ENCODE measurements at regions of chr11 and their contacts with region 1.

Region 1: GRCh38 chr11:61733120-61733978 is 19.1 kb upstream of the MYRF start:
- DNase-seq: peak; percentile 71 to 85
- H3K4me3 ChIP-seq: no peak overlapping the region
- H3K27ac ChIP-seq: no peak overlapping the region
- H3K4me1 ChIP-seq: peaks cover 35% of the 10 kb centered on the region
- H3K27me3 ChIP-seq: no peaks in the 10 kb centered on the region
- CTCF ChIP-seq: peak; percentile 98

Region 2: DNA sequence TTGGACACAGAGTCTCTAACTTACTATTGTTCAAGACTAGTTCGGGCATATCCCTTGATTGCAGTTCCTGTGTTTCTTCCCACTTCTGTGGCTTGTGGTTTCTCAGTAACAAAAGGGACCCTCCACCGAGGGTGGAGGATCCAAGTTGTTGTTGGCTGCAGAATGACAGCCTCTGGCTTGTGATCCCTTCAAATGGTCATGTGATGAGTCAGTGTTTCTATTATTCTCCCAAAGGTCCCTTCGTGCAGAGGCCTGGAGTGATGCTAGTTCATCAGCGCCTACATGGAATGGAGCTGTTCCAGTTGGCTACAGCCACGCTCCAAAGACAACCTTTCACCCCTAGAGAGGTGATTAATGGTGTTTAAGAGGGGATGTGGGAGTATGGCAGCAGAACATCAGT is 435.6 kb before region 1 on chr11:
- CTCF ChIA-PET with region 1: no interaction called
- POLR2A ChIA-PET with region 1: no interaction called
- intact Hi-C with region 1: no loop called
- DNase-seq: peak in 1 of 2 experiments; percentile 55
- H3K4me3 ChIP-seq: no peak overlapping the region
- H3K27ac ChIP-seq: no peak overlapping the region
- H3K4me1 ChIP-seq: no peaks in the 10 kb centered on the region
- H3K27me3 ChIP-seq: peaks cover 14% of the 10 kb centered on the region; the same call in 1 of the 2 replicates
- CTCF ChIP-seq: no peak

Region 3: GRCh38 chr11:61488651-61489291 is 244.6 kb before region 1 on chr11:
- CTCF ChIA-PET with region 1: interaction called, 3 read pairs
- POLR2A ChIA-PET with region 1: no interaction called
- intact Hi-C with region 1: loop called (anchors 5 kb)
- DNase-seq: peak; percentile 81 to 95
- H3K4me3 ChIP-seq: peak overlapping the region; percentile 42; the same call in 1 of the 2 replicates
- H3K27ac ChIP-seq: peak overlapping the region; percentile 88
- H3K4me1 ChIP-seq: peaks cover 53% of the 10 kb centered on the region
- H3K27me3 ChIP-seq: no peaks in the 10 kb centered on the region
- CTCF ChIP-seq: no peak

Region 4: GRCh38 chr11:61581030-61581928 is 152.1 kb before region 1 on chr11 and contains the start of gene SYT7:
- CTCF ChIA-PET with region 1: interaction called, 3 read pairs
- POLR2A ChIA-PET with region 1: no interaction called
- intact Hi-C with region 1: loop called (anchors 1 kb)
- DNase-seq: peak; percentile 90 to 99
- H3K4me3 ChIP-seq: peak within 1 kb of the TSS; percentile 57; the same call in 1 of the 2 replicates
- H3K27ac ChIP-seq: no peak within 1 kb of the TSS
- H3K4me1 ChIP-seq: peaks cover 4% of the 10 kb centered on the region; the same call in 1 of the 2 replicates
- H3K27me3 ChIP-seq: peaks cover 37% of the 10 kb centered on the region
- CTCF ChIP-seq: peak; percentile 28; the same call in 1 of the 2 replicates
- total RNA-seq, gene SYT7: 4.0 and 8.9 TPM in 2 replicates

Region 5: GRCh38 chr11:61627567-61628445 is 105.5 kb before region 1 on chr11:
- CTCF ChIA-PET with region 1: interaction called, 5 read pairs
- POLR2A ChIA-PET with region 1: no interaction called
- intact Hi-C with region 1: loop called (anchors 1 kb)
- DNase-seq: peak; percentile 70 to 80
- H3K4me3 ChIP-seq: no peak overlapping the region
- H3K27ac ChIP-seq: no peak overlapping the region
- H3K4me1 ChIP-seq: peaks cover 36% of the 10 kb centered on the region
- H3K27me3 ChIP-seq: no peaks in the 10 kb centered on the region
- CTCF ChIP-seq: peak; percentile 96

Region 6: GRCh38 chr11:61654397-61654829 is 78.9 kb before region 1 on chr11:
- CTCF ChIA-PET with region 1: no interaction called
- POLR2A ChIA-PET with region 1: no interaction called
- intact Hi-C with region 1: loop called (anchors 2 kb)
- DNase-seq: no peak
- H3K4me3 ChIP-seq: no peak overlapping the region
- H3K27ac ChIP-seq: no peak overlapping the region
- H3K4me1 ChIP-seq: no peaks in the 10 kb centered on the region
- H3K27me3 ChIP-seq: peaks cover 18% of the 10 kb centered on the region; the same call in 1 of the 2 replicates
- CTCF ChIP-seq: no peak

Region 7: GRCh38 chr11:61688365-61689163 is 44.8 kb before region 1 on chr11:
- CTCF ChIA-PET with region 1: no interaction called
- POLR2A ChIA-PET with region 1: no interaction called
- intact Hi-C with region 1: loop called (anchors 2 kb)
- DNase-seq: peak in 1 of 2 experiments; percentile 82
- H3K4me3 ChIP-seq: no peak overlapping the region
- H3K27ac ChIP-seq: no peak overlapping the region
- H3K4me1 ChIP-seq: peaks cover 2% of the 10 kb centered on the region
- H3K27me3 ChIP-seq: no peaks in the 10 kb centered on the region
- CTCF ChIP-seq: no peak

Region 8: DNA sequence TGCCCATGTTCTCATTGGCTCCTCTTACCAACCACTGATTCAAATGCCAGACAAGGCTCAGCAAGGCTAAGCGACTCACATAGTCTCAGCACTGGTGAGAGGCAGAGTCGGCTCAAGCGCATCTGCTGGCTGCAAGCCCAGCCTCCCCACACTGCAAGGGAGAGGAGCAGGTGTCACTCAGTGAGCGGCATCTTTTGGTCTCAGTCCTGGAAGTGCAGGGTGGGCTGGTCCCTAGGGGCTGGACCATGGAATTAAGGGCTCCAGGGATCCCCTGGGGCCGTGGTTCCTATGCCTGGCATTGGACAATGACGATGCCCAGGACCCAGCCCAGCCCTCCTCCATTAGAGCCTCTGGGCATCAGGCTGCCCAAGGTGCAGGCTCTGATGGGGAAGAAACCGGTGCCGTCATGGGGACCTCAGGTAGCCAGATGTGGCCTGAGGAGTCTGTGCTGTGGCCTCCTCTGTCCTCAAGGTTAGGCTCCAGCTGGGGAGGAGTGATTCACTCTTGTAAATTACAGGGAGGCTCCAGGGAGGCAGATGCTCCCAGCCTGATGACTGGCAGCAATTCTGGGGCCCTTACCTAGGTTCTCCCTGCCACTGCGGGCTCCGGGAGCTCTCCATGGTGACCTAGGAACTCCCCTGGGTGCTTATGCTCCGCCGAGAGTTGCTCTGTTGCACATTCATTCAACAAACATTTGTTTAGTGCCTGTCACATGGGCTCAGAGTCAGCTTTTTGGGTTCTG is 122.8 kb after region 1 on chr11:
- CTCF ChIA-PET with region 1: no interaction called
- POLR2A ChIA-PET with region 1: no interaction called
- intact Hi-C with region 1: no loop called
- DNase-seq: no peak
- H3K4me3 ChIP-seq: no peak overlapping the region
- H3K27ac ChIP-seq: no peak overlapping the region
- H3K4me1 ChIP-seq: no peaks in the 10 kb centered on the region
- H3K27me3 ChIP-seq: no peaks in the 10 kb centered on the region
- CTCF ChIP-seq: no peak

Measured in PC-9 (cell line).